ENCODE measurements at regions of chr16 and their contacts with region 1.

Region 1: GRCh38 chr16:27867122-27868110 is 196.1 kb downstream of the GSG1L start:
- DNase-seq: peak; percentile 5 to 67 (median 54)
- H3K4me3 ChIP-seq: no peak overlapping the region
- H3K27ac ChIP-seq: peak overlapping the region in 1 of 59 donors; percentile 7
- H3K27me3 ChIP-seq: no peaks in the 10 kb centered on the region
- CTCF ChIP-seq: peak in 55 of 56 donors; percentile 29 to 78 (median 57)

Region 2: DNA sequence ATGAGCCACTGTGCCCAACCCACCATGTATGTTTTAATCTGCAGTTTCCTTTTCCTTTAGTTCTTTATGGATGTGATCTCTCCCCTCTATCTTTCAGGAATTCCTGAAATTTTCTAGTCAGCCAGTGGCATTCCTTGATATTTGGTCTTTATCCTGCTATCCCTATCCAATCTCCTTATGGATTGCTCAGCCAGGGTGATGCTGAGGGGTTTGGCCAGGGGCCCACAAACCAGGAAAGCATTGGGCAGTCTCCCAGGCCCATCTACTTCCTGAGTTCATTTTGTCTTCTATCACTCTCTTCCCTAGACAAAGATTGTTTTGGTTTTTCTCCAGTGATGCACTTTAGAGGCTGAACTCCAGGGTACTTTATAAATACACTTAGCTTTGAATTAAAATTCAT is 201.5 kb before region 1 on chr16:
- intact Hi-C with region 1: no loop called
- DNase-seq: no peak
- H3K4me3 ChIP-seq: no peak overlapping the region
- H3K27ac ChIP-seq: no peak overlapping the region
- H3K27me3 ChIP-seq: no peaks in the 10 kb centered on the region
- CTCF ChIP-seq: no peak

Region 3: GRCh38 chr16:27690608-27691007 is 176.8 kb before region 1 on chr16:
- intact Hi-C with region 1: loop called in 1 of 2 experiments (anchors 5 kb)
- DNase-seq: peak in 6 of 10 donors; percentile 39 to 69 (median 62)
- H3K4me3 ChIP-seq: no peak overlapping the region
- H3K27ac ChIP-seq: peak overlapping the region in 25 of 59 donors; percentile 3 to 78 (median 50)
- H3K27me3 ChIP-seq: no peaks in the 10 kb centered on the region
- CTCF ChIP-seq: peak; percentile 22 to 79 (median 61)

Region 4: DNA sequence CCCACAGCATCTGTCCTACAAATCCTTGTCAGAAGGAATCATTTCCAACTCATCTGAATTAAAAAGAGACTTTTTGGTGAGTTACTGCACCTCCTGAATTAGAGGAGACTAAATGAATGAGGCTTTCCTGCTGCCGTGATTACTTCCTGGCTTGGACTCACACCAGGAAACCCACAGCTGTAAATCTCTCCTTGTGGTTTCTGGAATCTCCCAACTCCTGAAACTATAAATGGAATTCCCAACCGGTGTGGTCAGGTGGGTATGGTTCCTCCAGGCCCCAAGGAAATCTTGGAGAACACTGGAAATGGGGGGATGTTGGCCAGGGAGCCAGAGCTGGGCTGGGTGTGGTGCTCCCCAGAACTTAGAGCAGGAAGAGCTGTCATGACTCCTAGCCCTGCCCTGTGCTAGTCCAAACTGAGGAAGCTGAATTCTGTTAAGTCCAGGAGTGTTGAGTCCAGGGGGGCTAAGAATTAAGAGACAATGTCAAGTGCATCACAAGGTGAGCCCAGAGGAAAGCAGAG is 20.3 kb before region 1 on chr16:
- intact Hi-C with region 1: loop called in 1 of 2 experiments (anchors 1 kb)
- DNase-seq: peak in 1 of 10 donors; percentile 3
- H3K4me3 ChIP-seq: no peak overlapping the region
- H3K27ac ChIP-seq: no peak overlapping the region
- H3K27me3 ChIP-seq: no peaks in the 10 kb centered on the region
- CTCF ChIP-seq: no peak

Region 5: DNA sequence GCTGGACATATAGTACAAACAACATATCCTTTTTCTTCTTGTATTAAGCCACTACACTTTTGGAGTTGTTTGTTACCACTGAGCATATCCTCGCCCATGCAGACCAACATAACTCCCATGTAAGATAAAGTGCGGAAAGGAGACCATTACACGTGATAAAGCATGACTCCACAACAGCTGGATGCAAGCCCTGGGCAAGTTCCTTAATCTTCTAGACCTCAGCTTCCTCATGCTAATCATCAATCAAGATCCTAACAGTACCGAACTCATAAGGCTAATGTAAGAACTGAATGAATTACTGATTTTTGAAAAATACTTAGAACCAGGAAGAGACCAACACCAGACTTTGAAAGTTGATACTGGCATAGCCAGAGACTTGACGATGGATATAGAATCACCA is 243.1 kb after region 1 on chr16:
- intact Hi-C with region 1: no loop called
- DNase-seq: no peak
- H3K4me3 ChIP-seq: no peak overlapping the region
- H3K27ac ChIP-seq: no peak overlapping the region
- H3K27me3 ChIP-seq: no peaks in the 10 kb centered on the region
- CTCF ChIP-seq: no peak